ENCODE measurements at regions of chr21 and their contacts with region 1.

Region 1: GRCh38 chr21:33360881-33361602 is 36.3 kb downstream of the IFNAR1 start:
- DNase-seq: peak; percentile 80
- CTCF ChIP-seq: peak; percentile 92

Region 2: GRCh38 chr21:33199516-33200217 is 161.4 kb before region 1 on chr21:
- CTCF ChIA-PET with region 1: interaction called, 26 read pairs
- POLR2A ChIA-PET with region 1: no interaction called
- DNase-seq: peak; percentile 73
- CTCF ChIP-seq: peak; percentile 76

Region 3: GRCh38 chr21:33332143-33332542 is 28.9 kb before region 1 on chr21:
- CTCF ChIA-PET with region 1: interaction called, 48 read pairs
- POLR2A ChIA-PET with region 1: no interaction called
- DNase-seq: peak; percentile 41
- CTCF ChIP-seq: no peak

Region 4: DNA sequence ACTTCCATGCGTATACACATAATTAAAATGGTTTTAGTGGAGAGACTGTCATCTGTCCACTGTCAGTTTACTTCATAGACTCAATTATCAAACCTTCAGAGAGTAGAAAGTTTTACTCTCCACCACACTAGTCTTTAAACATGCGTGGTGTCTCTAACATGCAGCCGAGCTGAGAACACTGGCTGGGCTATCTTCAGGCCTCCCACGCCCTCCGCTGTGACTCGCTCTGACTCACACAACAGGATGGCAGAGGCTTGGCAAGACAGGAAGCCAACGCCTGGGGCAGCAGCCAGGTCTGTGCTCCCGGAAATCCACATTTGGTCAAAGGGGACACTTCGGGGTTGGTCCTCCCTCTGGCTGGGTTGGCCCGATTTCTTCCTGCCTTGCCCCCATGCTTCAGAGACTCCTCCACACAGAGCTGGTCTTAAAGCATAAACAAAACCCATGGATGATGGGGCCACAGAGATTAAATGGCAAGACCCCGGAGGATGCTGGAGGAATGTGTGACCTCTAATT is 19.5 kb after region 1 on chr21:
- CTCF ChIA-PET with region 1: interaction called, 142 read pairs
- POLR2A ChIA-PET with region 1: interaction called, 4 read pairs
- DNase-seq: peak; percentile 64
- CTCF ChIP-seq: no peak

Region 5: DNA sequence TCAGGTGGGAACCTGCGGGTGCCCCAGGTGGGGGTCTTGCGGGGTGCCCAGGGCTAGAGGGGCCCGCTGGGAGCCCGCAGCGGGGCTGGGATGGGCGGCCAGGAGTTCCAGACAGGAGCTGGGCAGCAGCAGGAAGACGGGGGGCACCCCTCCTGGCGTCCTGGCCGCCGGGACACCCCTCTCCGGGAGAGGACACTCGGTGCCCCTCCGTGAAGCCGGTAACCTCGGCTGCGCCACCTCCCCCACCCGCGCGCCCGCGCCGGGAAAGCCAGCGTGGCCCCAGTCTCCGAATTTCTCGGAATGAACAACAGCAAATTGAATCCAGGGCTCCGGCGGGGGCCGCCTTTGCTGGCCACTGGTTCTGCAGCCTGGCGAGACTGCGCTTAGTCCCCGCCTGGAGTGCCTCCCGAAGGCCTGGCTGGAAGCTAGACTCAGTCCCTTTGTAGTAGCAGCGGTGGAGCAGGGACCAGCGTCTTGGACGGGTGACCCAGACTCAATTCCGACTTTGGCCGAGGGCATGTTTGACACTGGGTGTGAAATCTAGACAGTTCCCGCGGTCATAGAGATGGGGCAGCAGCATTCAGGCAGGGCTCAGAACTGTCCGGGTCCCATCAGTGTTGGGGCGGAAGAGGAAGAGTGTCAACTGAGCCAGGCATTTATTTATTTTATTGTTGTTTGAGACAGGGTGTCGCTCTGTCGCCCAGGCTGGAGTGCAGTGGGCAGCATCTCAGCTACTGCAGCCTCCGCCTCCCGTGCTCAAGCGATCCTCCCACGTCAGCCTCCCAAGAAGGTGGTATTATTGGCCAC is 42.9 kb after region 1 on chr21:
- CTCF ChIA-PET with region 1: interaction called, 29 read pairs
- POLR2A ChIA-PET with region 1: interaction called, 7 read pairs
- DNase-seq: peak; percentile 47
- CTCF ChIP-seq: no peak

Region 6: DNA sequence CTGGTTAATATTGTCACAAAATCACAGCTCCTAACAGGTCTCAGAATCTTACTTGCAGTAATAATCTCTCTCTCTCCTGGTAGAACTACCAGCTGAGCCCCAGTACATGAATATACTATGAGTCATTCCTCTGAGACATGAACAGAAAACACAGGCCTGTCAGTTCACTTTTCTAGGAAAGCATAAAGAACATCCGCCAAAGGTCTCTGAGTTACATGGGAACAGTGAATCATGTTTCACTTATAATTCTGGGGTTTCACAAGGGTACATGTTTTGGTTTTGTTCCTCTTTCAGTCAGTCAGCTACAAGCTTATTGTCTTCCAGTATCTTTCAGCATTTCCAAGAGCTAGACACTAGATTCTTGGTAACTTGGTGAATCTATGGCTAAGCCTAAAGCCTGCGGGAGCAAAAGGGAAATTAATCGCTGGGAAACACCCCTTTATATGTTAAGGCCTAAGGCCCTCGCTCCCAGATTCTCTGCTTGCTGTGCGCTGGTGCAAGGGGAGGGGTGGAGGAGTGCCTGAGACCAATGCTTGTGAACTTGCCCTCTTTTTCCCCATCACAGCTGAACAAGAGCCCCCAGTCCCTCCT is 73.8 kb after region 1 on chr21:
- CTCF ChIA-PET with region 1: interaction called, 22 read pairs
- POLR2A ChIA-PET with region 1: interaction called, 4 read pairs
- DNase-seq: peak; percentile 86
- CTCF ChIP-seq: no peak

Region 7: GRCh38 chr21:33608559-33608958 is 247.5 kb after region 1 on chr21:
- CTCF ChIA-PET with region 1: interaction called, 14 read pairs
- POLR2A ChIA-PET with region 1: no interaction called
- DNase-seq: no peak
- CTCF ChIP-seq: no peak